Cardiac septum (tissue), 1 donor: ENCODE measurements at regions of chr12 and their contacts with region 1.

Region 1: DNA sequence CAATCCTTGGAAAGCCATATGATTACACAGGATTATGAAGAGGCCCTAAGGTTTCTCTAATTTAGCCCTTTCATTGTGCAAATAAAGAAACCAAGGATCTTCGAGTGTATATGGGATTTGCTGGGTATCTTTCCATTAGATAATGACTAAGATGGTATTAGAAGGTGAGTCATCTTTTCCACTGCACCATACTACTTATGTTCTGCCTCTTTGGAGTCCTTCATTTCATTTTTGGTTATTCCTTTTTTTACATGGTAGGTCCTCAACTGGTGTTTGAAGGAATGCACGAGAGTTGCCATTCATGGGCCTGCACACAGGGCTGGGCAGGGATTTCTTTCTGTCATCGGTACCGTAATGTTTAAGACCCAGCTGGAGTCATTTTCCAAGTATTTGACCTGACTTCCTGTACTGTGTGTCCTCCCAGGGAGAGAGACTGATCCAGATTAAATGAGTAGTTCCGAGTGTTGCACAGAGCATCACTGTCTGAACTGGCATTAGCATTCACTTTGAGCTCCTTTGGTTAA is 85.7 kb downstream of the BORCS5 start:
- DNase-seq: no peak

Region 2: DNA sequence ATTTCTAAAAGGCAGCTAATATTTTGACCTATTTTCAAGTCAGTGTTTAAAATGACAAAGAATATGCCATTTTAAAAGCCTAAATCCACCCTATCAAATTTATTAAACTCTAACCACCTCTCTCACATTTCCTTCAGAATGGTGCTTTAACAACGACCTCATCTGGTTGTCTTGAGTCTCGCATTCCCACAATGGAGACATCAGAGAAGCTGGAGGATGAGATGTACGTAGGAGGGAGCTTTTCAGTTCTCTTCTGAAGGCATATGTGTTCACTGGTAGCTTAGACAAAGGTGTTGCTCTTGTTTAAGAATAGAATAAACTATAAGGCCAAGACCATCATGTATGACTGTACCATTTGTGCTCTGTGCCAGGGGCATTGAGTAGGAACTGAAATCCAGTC is 289.0 kb before region 1 on chr12:
- intact Hi-C with region 1: no loop called
- DNase-seq: no peak

Region 3: GRCh38 chr12:12505544-12506495 is 63.2 kb after region 1 on chr12:
- intact Hi-C with region 1: loop called (anchors 5 kb)
- DNase-seq: no peak